Transverse colon (tissue), 4 donors: ENCODE measurements at regions of chr9 and their contacts with region 1.

Region 1: GRCh38 chr9:98207606-98208005 is 15.2 kb upstream of the CORO2A start:
- DNase-seq: no peak
- H3K4me3 ChIP-seq: no peak overlapping the region
- H3K27ac ChIP-seq: no peak overlapping the region
- H3K4me1 ChIP-seq: peaks cover 0 to 14% (median 4%) of the 10 kb centered on the region in 4 donors
- H3K27me3 ChIP-seq: no peaks in the 10 kb centered on the region
- CTCF ChIP-seq: no peak
- EP300 ChIP-seq: no peak
- POLR2A ChIP-seq: no peak

Region 2: DNA sequence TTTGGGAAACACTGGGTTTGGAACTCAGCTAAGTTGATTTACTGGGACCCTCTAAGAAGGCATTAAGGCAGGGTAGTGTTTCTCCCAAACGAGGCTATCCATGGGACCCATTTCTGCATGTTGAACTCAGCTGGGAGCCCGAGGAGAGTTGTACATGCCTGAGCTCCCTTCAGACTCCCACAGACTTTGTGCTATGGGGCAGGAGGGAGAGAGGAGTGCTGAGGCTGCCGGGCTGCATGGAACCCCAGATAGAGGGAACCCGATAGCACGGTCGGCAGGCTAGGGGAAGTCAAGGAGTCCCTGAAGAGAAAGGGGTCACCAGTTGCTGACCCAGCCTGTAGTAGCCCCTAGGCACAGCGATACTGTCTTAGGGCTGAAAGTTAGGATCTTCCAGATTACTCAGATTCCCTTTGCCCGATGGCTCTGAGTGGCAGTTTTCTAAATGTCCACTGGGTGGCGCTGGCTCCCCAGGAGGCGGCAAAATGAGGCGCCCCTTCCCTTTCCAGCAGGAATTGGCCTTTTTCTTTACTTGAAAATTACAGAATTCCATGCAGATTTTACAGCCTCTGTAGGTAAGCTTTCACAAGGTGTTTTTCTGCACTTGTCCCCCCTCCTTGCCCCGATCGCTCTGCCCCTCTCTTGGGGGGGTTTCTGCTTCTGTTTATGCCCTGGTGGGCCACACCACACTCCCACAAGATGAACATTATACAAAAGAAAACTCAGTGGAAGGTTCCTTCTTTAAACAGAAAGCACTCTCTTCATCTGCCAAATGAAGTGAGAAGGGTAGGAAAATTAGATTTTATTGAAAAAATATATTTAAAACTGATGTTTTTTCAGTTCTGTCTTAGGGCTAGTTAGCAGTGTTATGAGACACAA is 133.3 kb before region 1 on chr9:
- in situ Hi-C with region 1: loop called in 1 of 4 experiments (anchors 10 kb)
- intact Hi-C with region 1: no loop called
- DNase-seq: peak; percentile 82
- H3K4me3 ChIP-seq: peak overlapping the region in 1 of 4 donors; percentile 22
- H3K27ac ChIP-seq: peak overlapping the region; percentile 87 to 94 (median 88)
- H3K4me1 ChIP-seq: peaks cover 17 to 58% (median 33%) of the 10 kb centered on the region in 4 donors
- H3K27me3 ChIP-seq: no peaks in the 10 kb centered on the region
- CTCF ChIP-seq: peak; percentile 92 to 98 (median 97)
- EP300 ChIP-seq: no peak
- POLR2A ChIP-seq: no peak

Region 3: GRCh38 chr9:98191671-98192502 is 15.7 kb before region 1 on chr9:
- in situ Hi-C with region 1: no loop called
- intact Hi-C with region 1: no loop called
- DNase-seq: peak; percentile 59
- H3K4me3 ChIP-seq: peak overlapping the region; percentile 53 to 67 (median 62)
- H3K27ac ChIP-seq: peak overlapping the region; percentile 79 to 91 (median 87)
- H3K4me1 ChIP-seq: peaks cover 4 to 39% (median 15%) of the 10 kb centered on the region in 4 donors
- H3K27me3 ChIP-seq: no peaks in the 10 kb centered on the region
- CTCF ChIP-seq: no peak
- EP300 ChIP-seq: no peak
- POLR2A ChIP-seq: peak; percentile 58

Region 4: GRCh38 chr9:98263482-98264357 is 56.1 kb after region 1 on chr9:
- in situ Hi-C with region 1: loop called (anchors 5 to 10 kb)
- intact Hi-C with region 1: loop called (anchors 5 kb)
- DNase-seq: peak; percentile 86
- H3K4me3 ChIP-seq: no peak overlapping the region
- H3K27ac ChIP-seq: no peak overlapping the region
- H3K4me1 ChIP-seq: no peaks in the 10 kb centered on the region
- H3K27me3 ChIP-seq: no peaks in the 10 kb centered on the region
- CTCF ChIP-seq: peak; percentile 84 to 91 (median 88)
- EP300 ChIP-seq: no peak
- POLR2A ChIP-seq: no peak

Region 5: GRCh38 chr9:98341157-98342097 is 133.8 kb after region 1 on chr9:
- in situ Hi-C with region 1: no loop called
- intact Hi-C with region 1: no loop called
- DNase-seq: no peak
- H3K4me3 ChIP-seq: no peak overlapping the region
- H3K27ac ChIP-seq: no peak overlapping the region
- H3K4me1 ChIP-seq: no peaks in the 10 kb centered on the region
- H3K27me3 ChIP-seq: no peaks in the 10 kb centered on the region
- CTCF ChIP-seq: no peak
- EP300 ChIP-seq: no peak
- POLR2A ChIP-seq: no peak